ENCODE measurements at regions of chr7 and their contacts with region 1.

Region 1: GRCh38 chr7:156892821-156893706 is at the start of gene LMBR1:
- DNase-seq: peak; percentile 93
- H3K4me3 Mint-ChIP-seq: peak within 1 kb of the TSS; percentile 89
- H3K27ac Mint-ChIP-seq: peak within 1 kb of the TSS; percentile 92
- H3K4me1 Mint-ChIP-seq: peaks cover 34% of the 10 kb centered on the region
- H3K27me3 Mint-ChIP-seq: no peaks in the 10 kb centered on the region
- total RNA-seq, gene LMBR1: 25.2 to 33.8 TPM

Region 2: DNA sequence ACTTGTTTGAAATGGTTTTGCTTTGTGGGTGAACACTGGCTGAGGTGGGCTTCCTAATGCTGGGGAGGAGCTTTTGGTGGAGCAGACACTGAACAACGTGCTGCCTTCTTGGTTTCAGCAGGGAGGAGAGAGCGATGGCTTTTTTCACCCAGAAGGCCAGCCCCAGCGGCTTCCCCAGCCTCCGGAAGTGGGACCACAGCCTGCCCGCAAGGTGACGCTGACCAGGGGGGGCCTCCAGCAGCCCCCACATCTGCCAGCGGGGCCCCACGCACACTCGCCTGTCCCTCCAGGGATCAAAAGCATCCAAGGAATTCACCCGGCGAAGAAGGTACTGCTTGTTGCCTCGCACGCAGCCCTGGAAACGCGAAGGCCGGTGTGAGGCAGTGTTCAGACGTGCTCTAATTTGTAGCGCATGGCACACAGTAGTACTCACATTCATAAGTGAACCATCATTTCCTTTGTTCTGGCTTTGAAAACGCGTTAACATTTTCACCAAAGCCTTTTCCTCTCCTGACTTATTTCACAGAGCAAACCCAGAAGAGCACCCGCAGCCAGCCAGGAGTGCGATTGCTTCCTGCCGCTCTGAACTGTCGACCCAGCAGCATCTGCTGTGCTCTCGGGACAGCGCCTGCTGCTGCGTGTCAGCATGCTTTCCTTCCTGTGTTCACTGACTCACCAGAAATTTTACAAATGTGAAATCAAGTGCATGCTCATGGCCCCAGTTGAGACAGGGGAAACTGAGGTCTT is 1129.2 kb before region 1 on chr7:
- CTCF ChIA-PET with region 1: no interaction called
- intact Hi-C with region 1: loop called (anchors 1 kb)
- DNase-seq: peak; percentile 82
- H3K4me3 Mint-ChIP-seq: peak overlapping the region; percentile 70
- H3K27ac Mint-ChIP-seq: peak overlapping the region; percentile 95
- H3K4me1 Mint-ChIP-seq: peaks cover 42% of the 10 kb centered on the region
- H3K27me3 Mint-ChIP-seq: no peaks in the 10 kb centered on the region

Region 3: GRCh38 chr7:156640257-156640948 is 252.7 kb before region 1 on chr7 and contains the start of gene RNF32:
- CTCF ChIA-PET with region 1: no interaction called
- intact Hi-C with region 1: loop called (anchors 1 kb)
- DNase-seq: peak; percentile 98
- H3K4me3 Mint-ChIP-seq: peak within 1 kb of the TSS; percentile 78
- H3K27ac Mint-ChIP-seq: no peak within 1 kb of the TSS
- H3K4me1 Mint-ChIP-seq: peaks cover 10% of the 10 kb centered on the region
- H3K27me3 Mint-ChIP-seq: peaks cover 28% of the 10 kb centered on the region
- total RNA-seq, gene RNF32: 0.31 to 0.64 TPM

Region 4: DNA sequence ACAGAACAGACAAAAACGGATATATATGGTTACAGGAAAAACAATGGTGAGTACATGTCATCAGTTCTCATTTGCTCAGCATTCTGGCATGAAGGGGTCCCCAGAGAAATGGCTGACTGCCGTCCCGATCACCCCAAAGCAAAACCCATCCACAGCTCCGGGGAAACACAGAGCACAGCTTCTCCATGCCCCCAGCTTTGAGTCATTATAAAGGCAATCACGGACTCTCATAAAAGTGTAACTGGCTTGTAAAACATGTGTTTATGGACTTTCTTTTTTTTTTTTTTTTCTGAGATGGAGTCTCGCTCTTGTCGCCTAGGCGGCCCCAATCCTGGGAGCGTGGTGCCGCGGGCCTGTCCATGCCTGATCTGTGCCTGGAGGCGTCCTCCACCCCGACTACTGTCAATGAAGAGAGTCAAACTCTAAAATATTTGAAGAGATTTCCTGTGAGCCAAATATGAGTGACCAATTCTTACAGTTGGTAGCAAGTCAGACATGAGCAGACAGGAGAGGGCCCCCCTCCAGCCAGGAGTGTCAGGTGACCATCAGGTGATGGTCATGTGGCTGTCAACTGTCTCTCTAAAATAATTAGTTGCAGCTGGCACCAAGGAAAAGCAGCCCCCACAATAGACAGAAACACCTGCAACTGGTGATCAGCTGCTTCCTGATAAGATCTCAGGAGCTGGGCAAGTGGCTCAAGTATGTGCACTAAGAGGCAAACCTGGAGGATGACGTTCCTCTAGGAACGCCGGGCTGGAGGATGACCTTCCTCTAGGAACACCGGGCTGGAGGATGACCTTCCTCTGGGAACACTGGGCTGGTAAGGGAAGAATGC is 34.7 kb after region 1 on chr7:
- CTCF ChIA-PET with region 1: interaction called, 4 read pairs
- intact Hi-C with region 1: loop called (anchors 1 kb)
- DNase-seq: no peak
- H3K4me3 Mint-ChIP-seq: no peak overlapping the region
- H3K27ac Mint-ChIP-seq: no peak overlapping the region
- H3K4me1 Mint-ChIP-seq: peaks cover 19% of the 10 kb centered on the region
- H3K27me3 Mint-ChIP-seq: no peaks in the 10 kb centered on the region

Region 5: GRCh38 chr7:157138424-157139110 is 245.5 kb after region 1 on chr7 and contains the start of gene UBE3C:
- CTCF ChIA-PET with region 1: no interaction called
- intact Hi-C with region 1: loop called (anchors 1 kb)
- DNase-seq: peak; percentile 87
- H3K4me3 Mint-ChIP-seq: peak within 1 kb of the TSS; percentile 84
- H3K27ac Mint-ChIP-seq: peak within 1 kb of the TSS; percentile 92
- H3K4me1 Mint-ChIP-seq: peaks cover 38% of the 10 kb centered on the region
- H3K27me3 Mint-ChIP-seq: no peaks in the 10 kb centered on the region
- total RNA-seq, gene UBE3C: 52.9 to 55.7 TPM

Region 6: GRCh38 chr7:157336383-157337315 is 443.6 kb after region 1 on chr7 and contains the start of gene DNAJB6:
- CTCF ChIA-PET with region 1: no interaction called
- intact Hi-C with region 1: loop called (anchors 2 kb)
- DNase-seq: peak; percentile 95
- H3K4me3 Mint-ChIP-seq: peak within 1 kb of the TSS; percentile 92
- H3K27ac Mint-ChIP-seq: peak within 1 kb of the TSS; percentile 95
- H3K4me1 Mint-ChIP-seq: peaks cover 39% of the 10 kb centered on the region
- H3K27me3 Mint-ChIP-seq: no peaks in the 10 kb centered on the region
- total RNA-seq, gene DNAJB6: 69.0 to 72.1 TPM

Measured in activated naive CD4-positive, alpha-beta T cell treated with anti-CD3 and anti-CD28 coated beads for 36 hours (primary cell).